Mammary epithelial cell (primary cell): ENCODE measurements at regions of chr19 and their contacts with region 1.

Region 1: DNA sequence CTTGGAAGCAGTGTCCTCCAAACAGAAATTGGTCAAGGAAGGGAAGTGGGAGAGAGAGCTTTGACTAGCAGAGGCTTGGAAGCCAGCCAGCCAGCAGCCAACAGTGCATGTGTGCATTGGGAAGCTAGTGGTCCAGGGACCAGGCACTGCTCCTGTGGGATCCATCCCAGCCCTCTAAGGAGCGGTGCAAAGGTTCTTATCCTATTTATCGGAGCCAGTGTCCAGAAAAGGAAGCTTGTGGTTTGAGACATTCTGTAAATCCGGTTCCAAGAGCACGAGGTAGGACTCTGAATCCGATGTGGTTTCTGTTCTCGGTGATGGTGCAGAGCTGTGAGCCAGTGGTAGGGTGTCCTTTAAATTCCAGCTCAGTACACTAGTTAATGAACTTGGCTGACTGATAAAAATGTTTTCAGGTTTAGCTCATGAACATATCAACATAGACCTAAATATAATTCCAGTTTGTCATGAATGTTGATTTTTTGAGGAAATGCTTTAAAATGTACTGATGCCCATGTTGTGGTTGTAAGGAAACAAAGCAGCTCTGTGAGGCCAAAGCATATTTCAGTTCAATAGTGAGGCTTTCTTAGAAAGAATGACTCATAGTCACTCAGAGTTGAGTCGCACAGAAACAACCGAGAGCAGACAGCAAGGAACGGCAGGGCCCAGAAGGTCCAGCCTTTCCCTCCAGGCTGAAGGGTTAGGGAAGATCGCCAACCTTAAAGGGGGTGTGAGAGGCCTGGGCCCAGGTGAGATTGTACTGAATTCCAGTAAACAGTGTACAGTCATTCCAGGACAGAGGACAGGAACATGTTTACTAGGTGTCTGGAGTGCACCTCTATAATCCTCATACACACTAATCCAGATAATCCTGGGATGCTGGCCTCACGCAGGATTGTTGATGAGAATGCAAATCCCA is 21.5 kb upstream of the GARRE1 start:
- DNase-seq: peak; percentile 96
- H3K4me3 ChIP-seq: no peak overlapping the region
- H3K27ac ChIP-seq: peak overlapping the region; percentile 67
- H3K4me1 ChIP-seq: peaks cover 29% of the 10 kb centered on the region
- H3K27me3 ChIP-seq: no peaks in the 10 kb centered on the region
- CTCF ChIP-seq: no peak

Region 2: DNA sequence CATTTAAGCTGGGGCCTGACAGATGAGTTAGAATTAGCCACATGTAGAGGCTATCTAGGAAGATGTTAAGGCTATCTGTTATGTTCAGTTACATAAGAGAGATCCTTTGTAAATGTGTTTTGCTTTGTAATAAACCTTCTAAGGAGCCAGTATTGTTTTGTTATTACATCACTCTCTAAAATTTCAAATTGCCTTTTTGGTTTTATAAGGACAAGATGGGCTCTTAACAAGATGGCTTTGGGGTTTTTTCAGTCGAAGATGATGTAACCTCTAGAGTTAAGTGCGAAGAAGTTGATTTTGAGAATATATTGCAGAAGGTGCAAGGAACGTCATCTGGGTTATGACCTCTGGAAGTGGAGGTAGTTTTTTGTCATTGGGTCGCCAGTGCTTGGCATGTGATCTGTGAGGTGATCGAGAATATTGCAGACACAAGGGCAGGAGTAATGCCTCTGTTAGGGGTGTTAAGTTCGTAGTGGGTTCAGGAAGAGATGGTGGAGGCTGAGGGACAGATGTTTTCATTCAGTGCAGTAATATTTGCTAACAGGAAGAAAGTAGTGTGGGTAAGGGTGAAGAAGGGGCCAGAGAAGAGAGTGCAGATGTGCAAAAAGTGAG is 47.8 kb before region 1 on chr19:
- CTCF ChIA-PET with region 1: no interaction called
- dilution Hi-C with region 1: loop called (anchors 5 kb)
- in situ Hi-C with region 1: no loop called
- intact Hi-C with region 1: no loop called
- DNase-seq: no peak
- H3K4me3 ChIP-seq: no peak overlapping the region
- H3K27ac ChIP-seq: no peak overlapping the region
- H3K4me1 ChIP-seq: no peaks in the 10 kb centered on the region
- H3K27me3 ChIP-seq: no peaks in the 10 kb centered on the region
- CTCF ChIP-seq: no peak

Region 3: DNA sequence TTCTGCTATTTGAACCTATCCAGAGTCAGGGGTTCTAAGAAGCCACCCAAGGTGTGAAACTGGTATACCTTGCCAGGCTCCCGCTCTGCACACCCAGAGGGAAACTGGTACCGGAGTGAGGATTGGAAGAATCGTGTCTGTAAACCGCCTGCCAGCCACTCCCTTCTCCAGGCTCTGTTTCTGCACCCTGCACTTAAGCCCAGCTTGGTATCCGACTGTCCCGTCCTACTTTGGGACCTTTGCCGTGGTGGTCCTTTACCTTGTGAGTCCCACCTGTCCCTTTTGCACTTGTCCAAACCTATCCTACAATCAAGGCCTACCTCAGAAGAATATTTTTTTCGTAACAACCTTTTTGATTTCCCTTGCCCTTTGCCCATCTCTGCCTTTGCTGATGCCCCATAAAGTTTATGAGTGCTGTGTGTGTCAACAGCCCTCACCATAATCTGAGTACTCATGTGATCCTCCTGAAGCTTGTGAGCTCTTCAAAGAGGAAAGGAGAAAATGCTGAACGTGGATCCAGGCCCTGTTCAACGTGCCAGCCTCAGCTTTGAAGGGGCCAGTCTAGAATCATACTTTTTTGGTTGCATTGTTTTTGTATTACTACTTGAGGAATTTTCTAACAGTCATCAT is 66.2 kb after region 1 on chr19:
- CTCF ChIA-PET with region 1: no interaction called
- dilution Hi-C with region 1: loop called (anchors 5 kb)
- in situ Hi-C with region 1: no loop called
- intact Hi-C with region 1: no loop called
- DNase-seq: no peak
- H3K4me3 ChIP-seq: no peak overlapping the region
- H3K27ac ChIP-seq: no peak overlapping the region
- H3K4me1 ChIP-seq: no peaks in the 10 kb centered on the region
- H3K27me3 ChIP-seq: no peaks in the 10 kb centered on the region
- CTCF ChIP-seq: no peak

Region 4: DNA sequence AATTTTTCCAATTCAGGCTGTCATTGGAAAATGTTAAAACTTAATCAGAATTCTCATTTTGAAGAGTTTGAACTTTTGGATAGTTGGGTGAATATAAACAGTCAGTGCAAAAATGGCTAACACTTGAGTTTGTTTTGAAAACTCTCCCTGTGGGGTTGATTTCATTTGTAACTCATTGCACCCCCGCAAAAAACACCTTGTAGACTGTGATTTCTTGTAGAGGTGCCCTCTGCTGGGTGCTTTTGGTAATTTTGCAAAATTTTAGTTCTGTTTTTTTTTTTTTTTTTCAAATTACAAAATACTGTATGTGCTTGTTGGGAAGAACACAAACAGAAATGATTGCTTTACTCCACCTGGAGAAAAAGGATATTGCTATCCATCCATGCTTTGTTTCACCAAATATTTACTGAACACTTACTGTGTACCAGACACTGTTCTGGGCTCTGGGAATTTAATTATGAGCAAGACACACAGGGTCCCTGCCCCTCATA is 104.0 kb after region 1 on chr19:
- CTCF ChIA-PET with region 1: no interaction called
- dilution Hi-C with region 1: no loop called
- in situ Hi-C with region 1: loop called in 1 of 2 experiments (anchors 10 kb)
- intact Hi-C with region 1: loop called (anchors 5 kb)
- DNase-seq: peak; percentile 16
- H3K4me3 ChIP-seq: no peak overlapping the region
- H3K27ac ChIP-seq: no peak overlapping the region
- H3K4me1 ChIP-seq: no peaks in the 10 kb centered on the region
- H3K27me3 ChIP-seq: no peaks in the 10 kb centered on the region
- CTCF ChIP-seq: peak; percentile 58 to 67

Region 5: DNA sequence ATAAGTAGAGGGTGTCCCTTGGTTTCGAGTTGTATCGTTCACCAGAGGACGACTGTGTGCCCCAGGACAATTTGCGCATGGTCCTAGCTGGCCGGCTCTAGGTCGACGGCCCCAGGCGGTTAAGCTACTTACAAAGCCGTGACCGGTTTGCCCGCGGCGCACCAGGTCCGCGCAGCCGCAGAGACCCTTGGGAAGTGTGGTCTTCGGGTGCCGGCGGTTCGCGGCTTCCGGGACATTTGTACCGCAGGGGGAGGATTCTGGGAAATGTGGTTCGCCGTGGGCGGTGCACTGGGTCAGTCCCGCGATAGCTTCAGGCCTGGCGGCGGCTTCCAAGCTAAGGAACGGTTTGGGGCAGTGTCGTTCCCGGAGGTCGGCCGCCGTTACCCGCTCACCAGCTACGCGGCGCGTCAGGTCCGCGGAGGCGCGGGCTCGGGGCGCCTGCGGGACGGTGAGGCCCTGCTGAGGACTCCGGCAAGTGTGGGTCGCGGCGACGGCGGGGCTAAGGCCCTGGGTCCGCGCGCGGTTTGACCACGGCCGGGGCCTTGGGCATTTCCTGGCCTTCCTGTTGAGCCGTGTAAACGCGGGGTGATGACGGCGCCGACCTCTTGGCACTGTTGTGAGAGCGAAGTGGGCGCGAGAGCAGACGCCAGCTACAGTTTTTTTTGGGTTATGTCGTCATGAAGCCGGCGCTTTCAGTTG is 444.7 kb after region 1 on chr19 and contains the start of gene ZNF302:
- CTCF ChIA-PET with region 1: no interaction called
- dilution Hi-C with region 1: no loop called
- in situ Hi-C with region 1: no loop called
- intact Hi-C with region 1: no loop called
- DNase-seq: peak; percentile 94
- H3K4me3 ChIP-seq: peak within 1 kb of the TSS; percentile 71 to 95 (median 86)
- H3K27ac ChIP-seq: peak within 1 kb of the TSS; percentile 84
- H3K4me1 ChIP-seq: peaks cover 5% of the 10 kb centered on the region
- H3K27me3 ChIP-seq: no peaks in the 10 kb centered on the region
- CTCF ChIP-seq: no peak
- total RNA-seq, gene ZNF302: 12.1 to 13.8 TPM